ENCODE measurements at regions of chr12 and their contacts with region 1.

Region 1: DNA sequence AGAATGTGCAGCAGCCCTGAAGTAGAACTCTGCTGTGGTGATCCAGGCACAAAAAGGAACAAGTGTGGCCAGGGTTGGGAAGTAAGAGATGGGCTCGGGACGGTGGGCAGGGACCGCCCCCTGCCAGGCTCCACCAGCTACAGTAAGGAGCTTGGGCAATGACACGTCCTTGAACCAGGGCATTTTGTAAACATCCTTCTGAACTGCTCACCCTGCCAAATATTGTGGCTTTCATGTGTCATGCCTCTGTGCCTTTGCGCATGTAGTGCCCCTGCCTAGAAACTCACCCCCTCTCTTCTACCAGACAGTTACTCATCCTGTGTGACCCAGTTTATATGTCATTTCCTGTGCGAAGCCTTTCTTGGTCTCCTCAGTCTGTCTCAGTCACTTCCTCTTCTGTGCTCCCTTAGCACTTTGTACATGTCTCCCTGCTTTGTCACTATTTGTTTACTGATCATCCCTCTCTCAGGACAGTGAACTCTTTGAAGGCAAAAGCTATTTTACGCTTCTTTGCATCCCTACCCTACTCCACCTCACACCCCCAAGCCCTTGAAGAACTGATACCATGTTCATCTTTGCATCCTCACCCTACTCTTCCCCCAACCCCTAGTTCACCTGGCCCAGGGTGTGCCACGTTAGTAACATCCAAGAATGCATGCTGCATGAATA is 108.9 kb upstream of the PLEKHG7 start:
- DNase-seq: peak; percentile 42
- H3K4me3 ChIP-seq: no peak overlapping the region
- H3K27ac ChIP-seq: peak overlapping the region; percentile 77
- H3K4me1 ChIP-seq: peaks cover 12% of the 10 kb centered on the region
- H3K27me3 ChIP-seq: no peaks in the 10 kb centered on the region
- CTCF ChIP-seq: no peak
- POLR2A ChIP-seq: no peak

Region 2: GRCh38 chr12:92143258-92143657 is 450.6 kb before region 1 on chr12:
- CTCF ChIA-PET with region 1: no interaction called
- POLR2A ChIA-PET with region 1: no interaction called
- dilution Hi-C with region 1: no loop called
- intact Hi-C with region 1: no loop called
- DNase-seq: peak; percentile 28
- H3K4me3 ChIP-seq: peak overlapping the region; percentile 53 to 86 (median 85)
- H3K27ac ChIP-seq: peak overlapping the region; percentile 80
- H3K4me1 ChIP-seq: peaks cover 34% of the 10 kb centered on the region
- H3K27me3 ChIP-seq: no peaks in the 10 kb centered on the region
- CTCF ChIP-seq: no peak
- POLR2A ChIP-seq: no peak

Region 3: DNA sequence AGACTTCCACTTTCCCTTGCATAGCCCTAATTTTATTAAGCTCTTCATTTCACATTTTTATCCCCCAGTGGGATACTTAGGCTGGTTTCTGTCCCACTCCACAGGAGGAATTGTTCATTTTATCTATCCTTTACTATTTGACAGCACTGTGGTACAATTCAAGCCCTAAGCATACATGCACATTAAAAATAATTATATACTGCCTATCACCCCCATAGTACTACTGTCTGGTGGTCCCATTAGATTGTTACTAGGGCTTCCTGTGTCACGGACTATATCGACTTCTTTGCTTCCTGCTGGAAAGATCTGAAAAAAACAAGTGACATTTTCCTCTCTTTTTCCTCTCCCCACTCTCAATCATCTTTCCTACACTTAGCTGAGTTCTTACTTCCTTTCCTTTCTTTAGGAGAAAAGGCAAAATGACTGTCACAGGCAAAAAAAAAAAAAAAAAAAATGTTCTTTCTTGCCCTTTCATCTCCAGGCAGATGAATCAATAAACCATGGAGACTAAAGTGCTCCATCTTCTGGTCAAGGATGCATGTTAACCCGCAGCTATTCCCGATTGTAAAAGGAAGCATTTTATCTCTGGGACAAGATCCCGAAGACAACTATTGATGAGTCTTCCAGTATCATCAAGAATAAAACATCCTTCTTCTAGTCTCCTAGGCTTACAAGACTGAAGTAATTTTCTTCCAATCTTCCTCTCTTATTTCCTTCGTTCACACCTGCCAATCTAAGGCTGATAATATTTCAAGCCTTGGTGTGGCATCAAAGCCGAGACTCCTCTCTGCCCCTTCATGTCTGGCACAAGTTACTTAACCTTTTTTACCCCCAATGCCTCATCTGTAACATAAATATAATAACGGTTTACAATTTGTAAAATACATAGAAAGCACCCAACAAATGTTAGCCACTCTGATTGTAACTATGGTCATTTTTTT is 14.6 kb after region 1 on chr12:
- CTCF ChIA-PET with region 1: interaction called, 12 read pairs
- POLR2A ChIA-PET with region 1: no interaction called
- dilution Hi-C with region 1: no loop called
- intact Hi-C with region 1: no loop called
- DNase-seq: peak; percentile 62
- H3K4me3 ChIP-seq: no peak overlapping the region
- H3K27ac ChIP-seq: no peak overlapping the region
- H3K4me1 ChIP-seq: peaks cover 4% of the 10 kb centered on the region
- H3K27me3 ChIP-seq: no peaks in the 10 kb centered on the region
- CTCF ChIP-seq: peak; percentile 34 to 38
- POLR2A ChIP-seq: no peak

Region 4: GRCh38 chr12:92649511-92650227 is 55.8 kb after region 1 on chr12:
- CTCF ChIA-PET with region 1: no interaction called
- POLR2A ChIA-PET with region 1: no interaction called
- dilution Hi-C with region 1: no loop called
- intact Hi-C with region 1: no loop called
- DNase-seq: peak; percentile 75
- H3K4me3 ChIP-seq: no peak overlapping the region
- H3K27ac ChIP-seq: no peak overlapping the region
- H3K4me1 ChIP-seq: no peaks in the 10 kb centered on the region
- H3K27me3 ChIP-seq: no peaks in the 10 kb centered on the region
- CTCF ChIP-seq: peak; percentile 69 to 70
- POLR2A ChIP-seq: no peak